ENCODE measurements at regions of chr22 and their contacts with region 1.

Region 1: GRCh38 chr22:37199103-37199759 is 11.2 kb upstream of the C1QTNF6 start:
- DNase-seq: peak; percentile 99 to 100
- ATAC-seq: peak; percentile 96 to 100 (median 96)
- H3K4me3 ChIP-seq: peak overlapping the region; percentile 80
- H3K4me3 Mint-ChIP-seq: peak overlapping the region; percentile 90
- H3K27ac ChIP-seq: peak overlapping the region; percentile 91
- H3K27ac Mint-ChIP-seq: peak overlapping the region; percentile 93 to 97
- H3K4me1 ChIP-seq: peaks cover 34% of the 10 kb centered on the region
- H3K4me1 Mint-ChIP-seq: peaks cover 28 to 40% of the 10 kb centered on the region in 2 donors
- H3K27me3 ChIP-seq: no peaks in the 10 kb centered on the region
- H3K27me3 Mint-ChIP-seq: no peaks in the 10 kb centered on the region
- CTCF ChIP-seq: peak; percentile 85

Region 2: DNA sequence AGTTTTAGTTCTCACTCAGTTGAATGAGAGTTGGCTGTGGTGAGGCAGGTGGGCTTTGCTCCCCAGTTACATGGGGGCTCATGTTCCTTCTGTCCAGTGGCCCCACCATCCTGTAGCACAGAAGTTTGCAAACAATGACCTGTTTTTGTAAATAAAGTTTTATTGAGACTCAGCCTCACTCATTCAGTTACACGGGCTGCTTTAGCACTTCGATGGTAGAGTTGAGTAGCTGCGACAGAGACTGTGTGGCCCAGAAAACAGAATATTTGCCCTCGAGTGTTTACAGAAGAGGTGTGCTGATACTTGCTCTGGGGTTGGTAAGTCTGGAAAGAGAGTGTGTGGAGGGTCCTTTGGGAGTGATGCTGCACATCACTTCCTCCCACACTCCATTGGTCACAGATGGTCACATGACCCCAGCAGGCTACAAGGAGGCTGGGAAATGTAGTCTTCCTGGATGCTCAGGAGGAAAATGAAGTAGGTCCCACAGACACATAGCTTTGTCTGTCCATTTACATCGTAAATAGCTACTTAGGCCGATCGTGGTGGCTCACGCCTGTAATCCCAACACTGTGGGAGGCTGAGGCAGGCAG is 457.9 kb before region 1 on chr22:
- intact Hi-C with region 1: no loop called
- DNase-seq: no peak
- ATAC-seq: peak in 1 of 3 donors; percentile 30
- H3K4me3 ChIP-seq: no peak overlapping the region
- H3K4me3 Mint-ChIP-seq: no peak overlapping the region
- H3K27ac ChIP-seq: no peak overlapping the region
- H3K27ac Mint-ChIP-seq: no peak overlapping the region
- H3K4me1 ChIP-seq: peaks cover 8% of the 10 kb centered on the region
- H3K4me1 Mint-ChIP-seq: no peaks in the 10 kb centered on the region
- H3K27me3 ChIP-seq: peaks cover 5% of the 10 kb centered on the region
- H3K27me3 Mint-ChIP-seq: peaks cover 13 to 16% of the 10 kb centered on the region in 2 donors
- CTCF ChIP-seq: no peak

Region 3: GRCh38 chr22:36781656-36782627 is 417.3 kb before region 1 on chr22:
- intact Hi-C with region 1: loop called (anchors 1 kb)
- DNase-seq: peak; percentile 81 to 88
- ATAC-seq: peak; percentile 94 to 98 (median 98)
- H3K4me3 ChIP-seq: no peak overlapping the region
- H3K4me3 Mint-ChIP-seq: no peak overlapping the region
- H3K27ac ChIP-seq: no peak overlapping the region
- H3K27ac Mint-ChIP-seq: peak overlapping the region in 1 of 2 donors; percentile 65
- H3K4me1 ChIP-seq: peaks cover 11% of the 10 kb centered on the region
- H3K4me1 Mint-ChIP-seq: peaks cover 7 to 15% of the 10 kb centered on the region in 2 donors
- H3K27me3 ChIP-seq: no peaks in the 10 kb centered on the region
- H3K27me3 Mint-ChIP-seq: peaks cover 11 to 22% of the 10 kb centered on the region in 2 donors
- CTCF ChIP-seq: peak; percentile 93

Region 4: GRCh38 chr22:37072673-37073072 is 126.6 kb before region 1 on chr22:
- intact Hi-C with region 1: loop called (anchors 1 kb)
- DNase-seq: no peak
- ATAC-seq: no peak
- H3K4me3 ChIP-seq: no peak overlapping the region
- H3K4me3 Mint-ChIP-seq: no peak overlapping the region
- H3K27ac ChIP-seq: no peak overlapping the region
- H3K27ac Mint-ChIP-seq: no peak overlapping the region
- H3K4me1 ChIP-seq: peaks cover under 1% of the 10 kb centered on the region
- H3K4me1 Mint-ChIP-seq: peaks cover under 1% of the 10 kb centered on the region in 2 donors
- H3K27me3 ChIP-seq: peaks cover 13% of the 10 kb centered on the region
- H3K27me3 Mint-ChIP-seq: peaks cover 17 to 23% of the 10 kb centered on the region in 2 donors
- CTCF ChIP-seq: no peak

Region 5: DNA sequence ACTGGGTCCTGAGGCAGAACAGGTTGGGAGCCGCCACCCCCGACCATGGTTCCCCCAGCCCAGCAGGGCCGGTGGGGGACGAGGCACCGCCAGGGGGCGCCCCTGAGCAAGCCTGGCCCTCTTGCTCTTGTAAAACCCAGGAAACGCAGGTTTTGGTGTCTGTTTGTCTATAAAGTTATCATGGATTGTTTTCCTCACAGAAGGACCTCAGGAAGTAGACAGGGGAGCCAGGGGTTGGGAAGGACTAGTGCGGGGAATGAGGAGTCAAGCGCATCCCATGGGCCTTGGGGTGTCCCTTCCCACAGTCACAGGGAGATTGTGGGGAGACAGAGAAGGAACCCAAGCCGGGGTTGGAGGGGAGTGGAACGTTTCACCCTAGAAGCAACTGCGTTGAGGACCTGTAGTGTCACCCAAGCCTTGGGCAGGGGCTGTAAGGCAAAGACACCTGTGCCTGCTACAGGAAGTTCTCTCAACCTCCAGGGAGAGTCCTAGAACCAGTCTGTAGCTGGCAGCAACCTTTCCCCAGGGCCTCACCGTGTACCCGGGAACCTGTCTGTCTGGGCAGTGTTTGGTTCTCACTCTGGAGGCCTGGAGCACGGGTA is 121.2 kb before region 1 on chr22:
- intact Hi-C with region 1: loop called (anchors 1 kb)
- DNase-seq: peak; percentile 85 to 90
- ATAC-seq: peak; percentile 18 to 42 (median 33)
- H3K4me3 ChIP-seq: no peak overlapping the region
- H3K4me3 Mint-ChIP-seq: peak overlapping the region; percentile 61
- H3K27ac ChIP-seq: no peak overlapping the region
- H3K27ac Mint-ChIP-seq: peak overlapping the region; percentile 97 to 99
- H3K4me1 ChIP-seq: peaks cover 33% of the 10 kb centered on the region
- H3K4me1 Mint-ChIP-seq: peaks cover 30 to 31% of the 10 kb centered on the region in 2 donors
- H3K27me3 ChIP-seq: no peaks in the 10 kb centered on the region
- H3K27me3 Mint-ChIP-seq: peaks cover 0 to 6% of the 10 kb centered on the region in 2 donors
- CTCF ChIP-seq: peak; percentile 100

Region 6: GRCh38 chr22:37121887-37122591 is 77.2 kb before region 1 on chr22:
- intact Hi-C with region 1: loop called (anchors 1 kb)
- DNase-seq: peak; percentile 80 to 98
- ATAC-seq: peak; percentile 88 to 98 (median 92)
- H3K4me3 ChIP-seq: no peak overlapping the region
- H3K4me3 Mint-ChIP-seq: peak overlapping the region; percentile 74
- H3K27ac ChIP-seq: peak overlapping the region; percentile 84
- H3K27ac Mint-ChIP-seq: peak overlapping the region; percentile 94 to 99
- H3K4me1 ChIP-seq: peaks cover 52% of the 10 kb centered on the region
- H3K4me1 Mint-ChIP-seq: peaks cover 40 to 46% of the 10 kb centered on the region in 2 donors
- H3K27me3 ChIP-seq: no peaks in the 10 kb centered on the region
- H3K27me3 Mint-ChIP-seq: no peaks in the 10 kb centered on the region
- CTCF ChIP-seq: no peak

Region 7: GRCh38 chr22:37148742-37149665 is 50.2 kb before region 1 on chr22:
- intact Hi-C with region 1: loop called (anchors 5 kb)
- DNase-seq: peak in 1 of 2 donors; percentile 32
- ATAC-seq: no peak
- H3K4me3 ChIP-seq: peak overlapping the region; percentile 92
- H3K4me3 Mint-ChIP-seq: peak overlapping the region; percentile 99
- H3K27ac ChIP-seq: peak overlapping the region; percentile 82
- H3K27ac Mint-ChIP-seq: peak overlapping the region; percentile 95 to 99
- H3K4me1 ChIP-seq: peaks cover 61% of the 10 kb centered on the region
- H3K4me1 Mint-ChIP-seq: peaks cover 71 to 85% of the 10 kb centered on the region in 2 donors
- H3K27me3 ChIP-seq: no peaks in the 10 kb centered on the region
- H3K27me3 Mint-ChIP-seq: no peaks in the 10 kb centered on the region
- CTCF ChIP-seq: no peak

Region 8: GRCh38 chr22:37229805-37230672 is 30.8 kb after region 1 on chr22:
- intact Hi-C with region 1: loop called (anchors 2 kb)
- DNase-seq: peak; percentile 85 to 96
- ATAC-seq: peak; percentile 78 to 93 (median 93)
- H3K4me3 ChIP-seq: peak overlapping the region; percentile 11
- H3K4me3 Mint-ChIP-seq: peak overlapping the region; percentile 81
- H3K27ac ChIP-seq: peak overlapping the region; percentile 97
- H3K27ac Mint-ChIP-seq: peak overlapping the region; percentile 93 to 98
- H3K4me1 ChIP-seq: peaks cover 94% of the 10 kb centered on the region
- H3K4me1 Mint-ChIP-seq: peaks cover 82 to 90% of the 10 kb centered on the region in 2 donors
- H3K27me3 ChIP-seq: no peaks in the 10 kb centered on the region
- H3K27me3 Mint-ChIP-seq: no peaks in the 10 kb centered on the region
- CTCF ChIP-seq: no peak

Region 9: GRCh38 chr22:37616201-37617083 is 417.2 kb after region 1 on chr22:
- intact Hi-C with region 1: no loop called
- DNase-seq: no peak
- ATAC-seq: no peak
- H3K4me3 ChIP-seq: no peak overlapping the region
- H3K4me3 Mint-ChIP-seq: no peak overlapping the region
- H3K27ac ChIP-seq: no peak overlapping the region
- H3K27ac Mint-ChIP-seq: no peak overlapping the region
- H3K4me1 ChIP-seq: no peaks in the 10 kb centered on the region
- H3K4me1 Mint-ChIP-seq: peaks cover 0 to 16% of the 10 kb centered on the region in 2 donors
- H3K27me3 ChIP-seq: no peaks in the 10 kb centered on the region
- H3K27me3 Mint-ChIP-seq: no peaks in the 10 kb centered on the region
- CTCF ChIP-seq: no peak